ENCODE measurements at regions of chr3 and their contacts with region 1.

Region 1: GRCh38 chr3:62558549-62559112 is 185.3 kb upstream of the FEZF2 start:
- DNase-seq: peak; percentile 36 to 72
- H3K4me3 ChIP-seq: no peak overlapping the region
- H3K27ac ChIP-seq: no peak overlapping the region
- H3K4me1 ChIP-seq: peaks cover 0 to 10% (median 5%) of the 10 kb centered on the region in 4 experiments; a peak in 2 of 7 replicates
- H3K27me3 ChIP-seq: no peaks in the 10 kb centered on the region
- CTCF ChIP-seq: peak; percentile 46 to 87 (median 73)
- EP300 ChIP-seq: no peak
- POLR2A ChIP-seq: no peak
- RAD21 ChIP-seq: peak; percentile 90 to 91

Region 2: GRCh38 chr3:62332835-62333244 is 225.8 kb before region 1 on chr3:
- CTCF ChIA-PET with region 1: interaction called, 135 read pairs
- POLR2A ChIA-PET with region 1: no interaction called
- DNase-seq: no peak
- H3K4me3 ChIP-seq: no peak overlapping the region
- H3K27ac ChIP-seq: no peak overlapping the region
- H3K4me1 ChIP-seq: peaks cover 0 to 3% (median 0%) of the 10 kb centered on the region in 4 experiments; a peak in 1 of 7 replicates
- H3K27me3 ChIP-seq: no peaks in the 10 kb centered on the region
- CTCF ChIP-seq: peak in 1 of 3 experiments; percentile 27; a peak in 1 of 4 replicates
- EP300 ChIP-seq: no peak
- POLR2A ChIP-seq: no peak
- RAD21 ChIP-seq: peak in 1 of 2 experiments; percentile 48

Region 3: DNA sequence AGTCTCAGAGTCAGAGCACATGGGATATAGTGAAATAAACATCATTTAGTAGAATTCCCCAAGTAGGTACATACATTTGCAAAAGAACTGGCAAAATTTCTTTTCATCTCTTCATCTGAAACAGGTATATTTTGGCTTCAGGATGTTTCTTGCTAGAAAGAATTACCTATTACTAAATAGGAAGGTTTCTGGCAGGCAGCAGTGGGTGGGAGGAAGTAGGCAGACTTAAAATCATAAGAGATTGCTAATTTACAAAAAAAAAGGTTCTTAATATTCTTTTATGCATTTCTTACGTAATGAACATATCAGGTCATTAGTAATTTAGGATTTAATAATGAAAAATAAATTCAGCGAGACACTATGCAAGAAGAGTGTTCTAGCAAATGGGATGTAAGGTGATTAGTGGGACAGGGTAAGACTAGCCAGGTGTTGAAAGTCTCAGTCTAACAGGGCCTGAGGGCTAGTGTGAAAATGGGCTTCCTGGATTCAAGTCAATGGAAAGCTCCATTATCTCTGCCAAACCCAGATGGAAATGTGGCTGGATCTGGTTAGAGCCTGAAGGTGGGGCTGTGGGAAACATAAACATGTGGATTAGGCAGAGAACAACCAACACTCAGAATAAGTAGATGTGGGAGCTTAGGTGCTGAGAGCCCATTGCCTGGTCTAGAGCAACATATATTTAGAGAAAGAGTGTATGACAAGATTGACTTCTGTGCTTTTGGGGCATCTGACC is 57.9 kb before region 1 on chr3:
- CTCF ChIA-PET with region 1: interaction called, 18 read pairs
- POLR2A ChIA-PET with region 1: no interaction called
- DNase-seq: no peak
- H3K4me3 ChIP-seq: no peak overlapping the region
- H3K27ac ChIP-seq: no peak overlapping the region
- H3K4me1 ChIP-seq: no peaks in the 10 kb centered on the region
- H3K27me3 ChIP-seq: no peaks in the 10 kb centered on the region
- CTCF ChIP-seq: peak in 2 of 3 experiments; percentile 19 to 29; a peak in 2 of 4 replicates
- EP300 ChIP-seq: no peak
- POLR2A ChIP-seq: no peak
- RAD21 ChIP-seq: peak; percentile 26 to 55

Region 4: GRCh38 chr3:62538706-62539356 is 19.8 kb before region 1 on chr3:
- CTCF ChIA-PET with region 1: interaction called, 29 read pairs
- POLR2A ChIA-PET with region 1: no interaction called
- DNase-seq: no peak
- H3K4me3 ChIP-seq: peak overlapping the region in 1 of 4 experiments; percentile 33; a peak in 1 of 8 replicates
- H3K27ac ChIP-seq: no peak overlapping the region
- H3K4me1 ChIP-seq: peaks cover 6 to 15% (median 12%) of the 10 kb centered on the region in 4 experiments; a peak in 6 of 7 replicates
- H3K27me3 ChIP-seq: no peaks in the 10 kb centered on the region
- CTCF ChIP-seq: no peak
- EP300 ChIP-seq: no peak
- POLR2A ChIP-seq: no peak
- RAD21 ChIP-seq: no peak

Measured in H1 (cell line).